Activated CD8-positive, alpha-beta T cell treated with anti-CD3 and anti-CD28 coated beads, Interleukin-2, amount 10 ng/mL, durations not matched to agents 7 days and 5 days (primary cell): ENCODE measurements at regions of chr11 and their contacts with region 1.

Region 1: GRCh38 chr11:122754553-122755322 is 83.6 kb upstream of the CRTAM start:
- DNase-seq: peak; percentile 66
- ATAC-seq: peak; percentile 35
- H3K4me3 Mint-ChIP-seq: no peak overlapping the region
- H3K27ac Mint-ChIP-seq: peak overlapping the region; percentile 79
- H3K4me1 Mint-ChIP-seq: peaks cover 89% of the 10 kb centered on the region
- H3K27me3 Mint-ChIP-seq: peaks cover 2% of the 10 kb centered on the region

Region 2: GRCh38 chr11:122628810-122629555 is 125.8 kb before region 1 on chr11:
- CTCF ChIA-PET with region 1: interaction called, 441 read pairs
- POLR2A ChIA-PET with region 1: interaction called, 11 read pairs
- DNase-seq: peak; percentile 81
- ATAC-seq: peak; percentile 86
- H3K4me3 Mint-ChIP-seq: no peak overlapping the region
- H3K27ac Mint-ChIP-seq: no peak overlapping the region
- H3K4me1 Mint-ChIP-seq: peaks cover 33% of the 10 kb centered on the region
- H3K27me3 Mint-ChIP-seq: peaks cover 2% of the 10 kb centered on the region

Region 3: DNA sequence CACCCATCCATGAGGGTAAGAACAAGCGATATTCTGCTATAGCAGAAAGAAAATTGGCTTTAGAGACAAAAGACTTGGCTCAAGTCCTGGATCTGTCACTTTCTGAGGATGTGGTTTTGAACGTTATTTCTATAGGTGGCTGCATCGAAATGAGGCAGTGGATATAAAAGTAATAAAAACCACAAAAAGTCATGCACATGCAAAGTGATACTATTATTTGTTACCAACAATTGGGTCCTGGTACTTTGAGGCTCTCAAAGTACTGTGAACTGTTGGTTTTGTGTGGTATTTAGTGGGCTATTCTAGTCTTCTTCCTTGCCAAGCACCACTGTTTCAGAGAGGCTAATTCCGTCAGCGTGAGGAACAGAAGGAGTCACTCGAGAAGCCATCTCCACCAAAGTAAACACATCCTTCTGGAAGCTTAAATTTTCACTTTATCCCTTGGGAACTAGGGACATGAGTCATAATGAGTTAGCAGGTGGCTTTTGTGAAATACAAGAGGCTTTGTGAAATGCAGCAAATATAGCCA is 86.1 kb before region 1 on chr11:
- CTCF ChIA-PET with region 1: interaction called, 225 read pairs
- POLR2A ChIA-PET with region 1: interaction called, 4 read pairs
- DNase-seq: peak; percentile 37
- ATAC-seq: peak; percentile 66
- H3K4me3 Mint-ChIP-seq: peak overlapping the region; percentile 35
- H3K27ac Mint-ChIP-seq: peak overlapping the region; percentile 94
- H3K4me1 Mint-ChIP-seq: peaks cover 74% of the 10 kb centered on the region
- H3K27me3 Mint-ChIP-seq: no peaks in the 10 kb centered on the region

Region 4: GRCh38 chr11:122711831-122712381 is 42.8 kb before region 1 on chr11:
- CTCF ChIA-PET with region 1: interaction called, 65 read pairs
- POLR2A ChIA-PET with region 1: interaction called, 5 read pairs
- DNase-seq: no peak
- ATAC-seq: no peak
- H3K4me3 Mint-ChIP-seq: no peak overlapping the region
- H3K27ac Mint-ChIP-seq: no peak overlapping the region
- H3K4me1 Mint-ChIP-seq: peaks cover 79% of the 10 kb centered on the region
- H3K27me3 Mint-ChIP-seq: no peaks in the 10 kb centered on the region

Region 5: DNA sequence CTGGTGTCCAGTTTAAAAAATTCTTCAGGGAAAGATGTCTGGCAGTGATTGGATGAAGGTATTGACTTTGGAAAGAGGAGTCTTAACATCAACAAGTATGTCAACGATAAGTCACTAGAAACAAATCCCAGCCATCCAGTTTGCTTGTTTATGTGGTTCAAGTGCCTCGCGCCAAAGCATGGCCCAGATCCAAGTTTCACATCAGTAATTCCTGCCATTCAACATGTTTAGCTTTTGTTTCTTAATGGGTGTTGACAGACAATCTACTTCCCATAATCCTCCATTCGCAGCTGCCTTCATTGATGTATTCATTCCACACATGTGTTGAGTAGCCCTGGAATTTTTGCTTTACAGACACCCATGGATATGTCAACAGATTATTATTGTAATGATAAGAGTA is 21.4 kb before region 1 on chr11:
- CTCF ChIA-PET with region 1: interaction called, 69 read pairs
- POLR2A ChIA-PET with region 1: no interaction called
- DNase-seq: no peak
- ATAC-seq: no peak
- H3K4me3 Mint-ChIP-seq: no peak overlapping the region
- H3K27ac Mint-ChIP-seq: no peak overlapping the region
- H3K4me1 Mint-ChIP-seq: peaks cover 16% of the 10 kb centered on the region
- H3K27me3 Mint-ChIP-seq: no peaks in the 10 kb centered on the region

Region 6: DNA sequence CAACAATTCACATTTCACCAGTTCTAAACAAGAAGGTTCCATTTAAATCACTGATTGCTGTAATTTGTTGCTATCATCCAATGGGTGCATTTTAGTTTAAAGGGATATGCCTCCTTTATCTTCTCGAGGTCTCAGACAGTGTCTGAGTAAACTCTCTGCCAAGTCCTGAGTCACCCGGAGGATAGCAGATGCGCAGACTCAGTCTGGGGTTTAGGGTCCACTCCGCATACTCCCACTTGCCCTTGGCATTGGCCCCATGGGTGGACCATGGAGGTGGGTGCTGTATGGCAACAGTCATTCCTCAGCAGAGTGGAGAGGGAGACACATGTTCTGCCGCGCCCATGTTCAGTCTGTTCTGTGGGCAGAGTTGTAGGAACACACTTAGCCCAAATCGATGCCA is 18.2 kb after region 1 on chr11:
- CTCF ChIA-PET with region 1: interaction called, 38 read pairs
- POLR2A ChIA-PET with region 1: interaction called, 3 read pairs
- DNase-seq: no peak
- ATAC-seq: no peak
- H3K4me3 Mint-ChIP-seq: no peak overlapping the region
- H3K27ac Mint-ChIP-seq: no peak overlapping the region
- H3K4me1 Mint-ChIP-seq: peaks cover 23% of the 10 kb centered on the region
- H3K27me3 Mint-ChIP-seq: no peaks in the 10 kb centered on the region

Region 7: GRCh38 chr11:122853971-122854446 is 99.3 kb after region 1 on chr11:
- CTCF ChIA-PET with region 1: interaction called, 139 read pairs
- POLR2A ChIA-PET with region 1: interaction called, 3 read pairs
- DNase-seq: peak; percentile 75
- ATAC-seq: no peak
- H3K4me3 Mint-ChIP-seq: no peak overlapping the region
- H3K27ac Mint-ChIP-seq: no peak overlapping the region
- H3K4me1 Mint-ChIP-seq: peaks cover 60% of the 10 kb centered on the region
- H3K27me3 Mint-ChIP-seq: no peaks in the 10 kb centered on the region

Region 8: DNA sequence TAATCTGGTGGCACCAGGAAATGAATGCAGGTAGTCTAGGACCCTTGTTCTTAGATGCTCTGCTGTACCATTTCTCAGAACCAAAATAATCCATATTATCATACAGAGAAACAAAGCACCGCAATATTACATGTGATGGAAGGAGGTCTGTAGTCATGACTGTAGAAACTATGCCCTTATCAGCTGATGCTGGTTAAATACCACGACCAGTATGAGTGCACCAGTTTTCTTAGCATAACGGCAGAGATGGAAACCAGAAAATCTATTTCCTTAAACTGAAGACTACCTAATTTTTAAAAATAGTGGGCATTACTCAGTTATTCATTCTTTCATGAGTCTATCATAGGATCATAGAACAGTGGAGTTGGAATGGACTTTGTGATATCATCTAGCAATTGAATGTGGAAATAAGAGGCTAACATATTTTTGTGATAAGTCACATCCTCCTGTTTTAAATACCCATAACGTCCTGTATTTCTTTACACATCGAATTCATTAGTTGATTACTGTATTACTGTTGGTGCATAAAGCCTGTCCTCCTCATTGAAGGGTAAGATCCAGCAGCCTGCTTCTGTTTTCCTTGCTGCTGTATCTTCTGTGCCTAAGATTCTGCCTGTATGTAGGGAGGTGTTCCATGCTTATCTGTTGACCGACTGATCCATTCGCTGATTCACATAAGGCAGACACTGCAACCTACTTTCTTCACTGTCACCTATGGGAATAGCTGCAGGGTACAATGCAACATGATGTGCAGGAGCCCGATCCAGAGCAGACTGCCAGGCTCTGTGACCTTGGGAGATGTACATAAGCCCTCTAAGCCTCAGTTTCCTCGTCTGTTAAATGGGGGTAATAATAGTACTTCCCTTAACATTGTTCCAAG is 143.1 kb after region 1 on chr11:
- CTCF ChIA-PET with region 1: no interaction called
- POLR2A ChIA-PET with region 1: no interaction called
- DNase-seq: no peak
- ATAC-seq: no peak
- H3K4me3 Mint-ChIP-seq: no peak overlapping the region
- H3K27ac Mint-ChIP-seq: no peak overlapping the region
- H3K4me1 Mint-ChIP-seq: peaks cover 3% of the 10 kb centered on the region
- H3K27me3 Mint-ChIP-seq: no peaks in the 10 kb centered on the region

Region 9: DNA sequence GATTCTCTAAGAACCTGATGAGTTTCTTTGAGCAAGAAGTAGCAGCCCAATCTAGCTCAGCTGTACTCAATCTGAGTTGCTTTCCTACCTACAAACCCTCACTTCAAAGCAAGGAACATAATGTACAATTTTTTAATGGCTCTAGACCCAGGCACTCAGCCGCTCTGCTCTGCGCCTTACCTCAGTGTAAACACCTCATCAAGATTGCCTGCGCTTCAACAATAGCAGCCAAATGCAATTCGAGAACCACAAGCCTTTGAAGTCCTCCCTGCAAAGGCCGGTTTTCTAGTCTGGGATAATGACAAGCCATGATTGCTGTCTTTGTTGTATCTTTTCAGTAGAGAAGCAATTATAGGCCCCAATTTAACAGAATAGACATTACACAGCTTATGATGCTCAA is 165.8 kb after region 1 on chr11:
- CTCF ChIA-PET with region 1: no interaction called
- POLR2A ChIA-PET with region 1: no interaction called
- DNase-seq: no peak
- ATAC-seq: no peak
- H3K4me3 Mint-ChIP-seq: no peak overlapping the region
- H3K27ac Mint-ChIP-seq: no peak overlapping the region
- H3K4me1 Mint-ChIP-seq: no peaks in the 10 kb centered on the region
- H3K27me3 Mint-ChIP-seq: no peaks in the 10 kb centered on the region